HCT116 (cell line): ENCODE measurements at regions of chr11 and their contacts with region 1.

Region 1: GRCh38 chr11:122108192-122108799 is 7.7 kb downstream of the BLID start:
- DNase-seq: peak; percentile 57
- ATAC-seq: peak; percentile 35; the same call in 1 of the 2 replicates
- H3K4me3 ChIP-seq: no peak overlapping the region
- H3K27ac ChIP-seq: peak overlapping the region; percentile 70
- H3K4me1 ChIP-seq: peaks cover 86 to 98% of the 10 kb centered on the region in 2 experiments
- H3K27me3 ChIP-seq: no peaks in the 10 kb centered on the region
- CTCF ChIP-seq: peak; percentile 22 to 95 (median 92); a peak in 5 of 6 replicates
- POLR2A ChIP-seq: no peak
- RAD21 ChIP-seq: peak; percentile 63

Region 2: DNA sequence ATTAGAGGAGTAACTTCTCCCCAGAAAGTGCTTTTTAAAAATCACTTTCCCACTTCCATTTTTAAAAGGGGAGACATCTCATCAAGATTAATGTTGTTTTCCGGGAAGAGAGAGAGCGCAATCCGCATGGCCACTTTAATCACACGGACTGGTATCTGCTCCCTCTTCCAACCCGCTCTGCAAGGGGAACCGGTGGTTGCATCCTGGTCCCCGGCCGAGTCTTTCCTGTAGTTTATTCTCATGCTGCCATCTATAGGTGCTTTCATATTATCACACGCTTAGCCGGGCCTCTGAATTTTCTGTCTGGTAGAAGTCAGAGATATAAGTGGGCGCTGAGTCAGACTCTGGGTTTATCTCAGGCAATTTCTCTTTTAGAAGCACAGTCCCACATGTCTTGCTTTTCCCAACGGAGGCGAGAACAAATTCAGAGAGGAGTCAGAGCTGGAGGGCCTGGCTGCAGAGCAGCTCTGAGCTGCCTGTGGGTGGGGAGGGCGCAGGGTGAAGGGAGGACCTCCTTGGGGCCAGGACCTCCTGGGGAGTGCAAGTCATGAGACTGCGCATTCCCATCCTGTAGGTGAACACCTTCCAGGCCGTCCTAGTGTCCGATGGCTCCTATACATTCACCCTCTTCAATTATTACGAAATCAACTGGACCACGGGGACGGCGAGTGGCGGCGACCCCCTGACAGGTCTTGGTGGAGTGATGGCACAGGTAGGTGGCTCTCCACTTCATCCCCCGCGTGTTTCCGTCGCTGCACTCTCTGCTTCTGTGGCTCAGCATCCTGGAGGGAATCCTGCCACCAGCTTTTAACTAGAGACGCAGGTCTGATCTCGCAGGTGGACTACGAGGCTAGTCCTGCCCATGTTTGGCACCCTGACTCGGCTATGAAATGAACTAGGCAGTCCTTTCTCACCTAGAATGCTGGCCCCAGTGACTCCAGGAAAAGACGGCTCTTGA is 995.5 kb before region 1 on chr11:
- CTCF ChIA-PET with region 1: no interaction called
- POLR2A ChIA-PET with region 1: no interaction called
- RAD21 ChIA-PET with region 1: no interaction called
- intact Hi-C with region 1: no loop called
- DNase-seq: peak; percentile 35
- ATAC-seq: peak; percentile 98
- H3K4me3 ChIP-seq: no peak overlapping the region
- H3K27ac ChIP-seq: no peak overlapping the region
- H3K4me1 ChIP-seq: 0 out of 4 replicates have a peak, but pooled peaks cover 0 to 3% of the 10 kb centered on the region in 2 experiments
- H3K27me3 ChIP-seq: peaks cover 8% of the 10 kb centered on the region; the same call in 1 of the 2 replicates
- CTCF ChIP-seq: peak; percentile 43 to 70 (median 67)
- POLR2A ChIP-seq: no peak
- RAD21 ChIP-seq: peak; percentile 81

Region 3: GRCh38 chr11:122095681-122096262 is 12.5 kb before region 1 on chr11:
- CTCF ChIA-PET with region 1: interaction called, 13 read pairs
- POLR2A ChIA-PET with region 1: no interaction called
- RAD21 ChIA-PET with region 1: no interaction called
- intact Hi-C with region 1: no loop called
- DNase-seq: no peak
- ATAC-seq: no peak
- H3K4me3 ChIP-seq: no peak overlapping the region
- H3K27ac ChIP-seq: no peak overlapping the region
- H3K4me1 ChIP-seq: peaks cover 6 to 50% of the 10 kb centered on the region in 2 experiments; a peak in 3 of 4 replicates
- H3K27me3 ChIP-seq: no peaks in the 10 kb centered on the region
- CTCF ChIP-seq: no peak
- POLR2A ChIP-seq: no peak
- RAD21 ChIP-seq: 0 out of 2 replicates have a peak, but pooled peaks have one; percentile 2

Region 4: DNA sequence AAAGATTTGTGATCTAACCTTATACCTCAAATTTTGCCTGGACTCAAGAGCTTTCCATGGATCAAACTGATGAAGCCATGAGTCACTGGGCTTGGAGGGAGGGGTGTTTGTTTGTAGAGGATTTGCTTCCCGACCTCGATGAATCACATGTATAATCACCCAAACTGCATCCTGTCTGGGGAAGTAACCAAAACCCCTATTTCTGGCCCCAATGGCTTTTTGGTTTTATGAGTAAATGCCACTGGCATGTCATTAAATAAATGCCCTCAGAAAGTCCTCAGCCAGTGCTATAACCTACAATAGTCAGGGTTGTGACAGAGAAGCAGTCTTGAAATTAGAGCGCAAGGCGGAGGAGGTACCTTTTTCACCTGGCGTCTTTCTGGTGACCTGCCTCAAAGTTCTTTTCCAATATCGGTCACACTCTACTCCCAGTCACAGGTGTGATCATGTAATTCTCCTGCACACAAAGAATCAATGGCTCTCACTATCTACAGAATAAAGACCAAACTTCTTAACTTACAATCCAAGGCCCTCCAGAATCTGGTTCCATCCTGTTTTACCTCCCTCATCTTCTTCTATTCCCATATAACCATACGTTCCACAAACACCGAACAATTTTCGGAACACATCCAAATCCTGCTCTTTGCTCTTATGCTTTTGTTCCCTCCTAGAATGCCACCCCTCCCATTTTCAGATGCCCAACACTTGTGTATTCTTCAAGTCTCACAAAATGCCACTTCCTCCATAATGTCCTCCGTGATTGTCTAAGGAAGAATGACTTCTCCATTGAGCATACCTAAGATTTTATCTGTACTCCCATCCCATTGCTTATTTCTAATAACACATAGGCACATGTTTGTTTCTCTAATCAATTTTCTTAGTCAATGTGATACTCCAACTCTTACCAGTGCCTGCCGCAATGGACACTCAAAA is 89.0 kb after region 1 on chr11:
- CTCF ChIA-PET with region 1: interaction called, 7 read pairs
- POLR2A ChIA-PET with region 1: interaction called, 3 read pairs
- RAD21 ChIA-PET with region 1: no interaction called
- intact Hi-C with region 1: loop called (anchors 1 kb)
- DNase-seq: peak; percentile 99
- ATAC-seq: peak; percentile 74
- H3K4me3 ChIP-seq: peak overlapping the region in 1 of 2 experiments; percentile 16; a peak in 1 of 4 replicates
- H3K27ac ChIP-seq: peak overlapping the region; percentile 97
- H3K4me1 ChIP-seq: peaks cover 76 to 95% of the 10 kb centered on the region in 2 experiments
- H3K27me3 ChIP-seq: no peaks in the 10 kb centered on the region
- CTCF ChIP-seq: no peak
- POLR2A ChIP-seq: peak; percentile 54
- RAD21 ChIP-seq: no peak

Region 5: GRCh38 chr11:122505304-122506006 is 397.2 kb after region 1 on chr11:
- CTCF ChIA-PET with region 1: no interaction called
- POLR2A ChIA-PET with region 1: no interaction called
- RAD21 ChIA-PET with region 1: no interaction called
- intact Hi-C with region 1: loop called (anchors 10 kb)
- DNase-seq: peak; percentile 58
- ATAC-seq: peak; percentile 99
- H3K4me3 ChIP-seq: no peak overlapping the region
- H3K27ac ChIP-seq: no peak overlapping the region
- H3K4me1 ChIP-seq: peaks cover 0 to 3% of the 10 kb centered on the region in 2 experiments; a peak in 3 of 4 replicates
- H3K27me3 ChIP-seq: no peaks in the 10 kb centered on the region
- CTCF ChIP-seq: peak; percentile 80 to 91 (median 91); a peak in 5 of 6 replicates
- POLR2A ChIP-seq: no peak
- RAD21 ChIP-seq: peak; percentile 98